ENCODE measurements at regions of chr4 and their contacts with region 1.

Region 1: GRCh38 chr4:151614561-151614960 is 146.2 kb downstream of the GATB start:
- DNase-seq: no peak
- H3K4me3 ChIP-seq: no peak overlapping the region
- H3K4me3 Mint-ChIP-seq: no peak overlapping the region
- H3K27ac Mint-ChIP-seq: no peak overlapping the region
- H3K4me1 ChIP-seq: no peaks in the 10 kb centered on the region
- H3K4me1 Mint-ChIP-seq: no peaks in the 10 kb centered on the region
- H3K27me3 ChIP-seq: no peaks in the 10 kb centered on the region
- H3K27me3 Mint-ChIP-seq: no peaks in the 10 kb centered on the region
- CTCF ChIP-seq: no peak

Region 2: GRCh38 chr4:151276787-151277562 is 337.6 kb before region 1 on chr4 and contains the start of gene PRSS48:
- CTCF ChIA-PET with region 1: no interaction called
- POLR2A ChIA-PET with region 1: no interaction called
- intact Hi-C with region 1: loop called (anchors 1 kb)
- DNase-seq: peak; percentile 74 to 85
- H3K4me3 ChIP-seq: no peak within 1 kb of the TSS
- H3K4me3 Mint-ChIP-seq: no peak within 1 kb of the TSS
- H3K27ac Mint-ChIP-seq: peak within 1 kb of the TSS; percentile 49
- H3K4me1 ChIP-seq: peaks cover 9% of the 10 kb centered on the region
- H3K4me1 Mint-ChIP-seq: peaks cover 33% of the 10 kb centered on the region
- H3K27me3 ChIP-seq: no peaks in the 10 kb centered on the region
- H3K27me3 Mint-ChIP-seq: no peaks in the 10 kb centered on the region
- CTCF ChIP-seq: peak; percentile 75 to 80
- total RNA-seq, gene PRSS48: not detected in 2 replicates

Region 3: DNA sequence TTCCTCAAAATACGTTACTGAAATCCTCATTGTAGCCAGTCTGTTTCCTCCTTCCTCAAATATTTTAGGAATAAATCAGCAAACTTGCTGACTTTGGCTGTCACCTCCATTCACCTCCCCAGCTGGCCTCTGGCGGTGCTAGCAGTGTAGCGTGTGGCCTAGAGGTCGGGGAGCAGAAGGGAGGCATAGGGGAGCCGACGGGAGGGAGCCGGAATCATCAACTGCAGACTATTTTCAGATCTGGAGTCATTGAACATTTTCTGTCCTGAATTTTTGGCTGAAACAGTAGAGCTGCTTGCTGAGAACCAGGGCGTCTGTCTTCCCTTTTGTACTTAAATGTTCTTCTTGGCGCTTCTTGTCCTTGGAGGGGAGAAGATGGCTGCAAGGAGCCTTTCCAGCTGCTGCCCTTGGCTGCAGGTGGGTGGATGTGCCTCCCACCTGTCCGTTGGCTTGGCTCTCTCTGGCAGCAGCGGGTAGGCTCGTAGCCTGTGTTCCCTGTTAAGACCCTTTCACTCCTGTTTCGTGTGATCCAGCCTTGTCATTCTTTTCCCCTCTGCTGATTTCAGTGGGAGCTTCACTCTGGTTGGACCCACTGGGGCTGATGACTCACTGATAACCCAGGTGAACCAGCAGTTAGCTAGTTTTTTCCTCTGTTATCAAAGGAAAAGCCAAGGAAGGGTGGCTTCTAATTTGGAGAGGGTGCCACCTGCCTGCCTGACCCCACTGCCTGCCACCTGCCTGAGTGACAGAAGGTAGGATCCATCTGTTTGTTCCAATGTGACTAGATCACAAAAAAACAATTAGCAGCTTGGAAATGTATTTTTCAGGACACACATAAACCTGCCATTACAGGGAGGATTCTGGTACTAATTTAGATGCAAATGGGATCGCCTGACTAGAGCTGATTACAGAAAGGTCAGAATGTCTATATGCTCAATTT is 10.3 kb after region 1 on chr4:
- CTCF ChIA-PET with region 1: no interaction called
- POLR2A ChIA-PET with region 1: no interaction called
- intact Hi-C with region 1: loop called (anchors 1 kb)
- DNase-seq: no peak
- H3K4me3 ChIP-seq: no peak overlapping the region
- H3K4me3 Mint-ChIP-seq: no peak overlapping the region
- H3K27ac Mint-ChIP-seq: no peak overlapping the region
- H3K4me1 ChIP-seq: no peaks in the 10 kb centered on the region
- H3K4me1 Mint-ChIP-seq: no peaks in the 10 kb centered on the region
- H3K27me3 ChIP-seq: no peaks in the 10 kb centered on the region
- H3K27me3 Mint-ChIP-seq: no peaks in the 10 kb centered on the region
- CTCF ChIP-seq: no peak

Region 4: DNA sequence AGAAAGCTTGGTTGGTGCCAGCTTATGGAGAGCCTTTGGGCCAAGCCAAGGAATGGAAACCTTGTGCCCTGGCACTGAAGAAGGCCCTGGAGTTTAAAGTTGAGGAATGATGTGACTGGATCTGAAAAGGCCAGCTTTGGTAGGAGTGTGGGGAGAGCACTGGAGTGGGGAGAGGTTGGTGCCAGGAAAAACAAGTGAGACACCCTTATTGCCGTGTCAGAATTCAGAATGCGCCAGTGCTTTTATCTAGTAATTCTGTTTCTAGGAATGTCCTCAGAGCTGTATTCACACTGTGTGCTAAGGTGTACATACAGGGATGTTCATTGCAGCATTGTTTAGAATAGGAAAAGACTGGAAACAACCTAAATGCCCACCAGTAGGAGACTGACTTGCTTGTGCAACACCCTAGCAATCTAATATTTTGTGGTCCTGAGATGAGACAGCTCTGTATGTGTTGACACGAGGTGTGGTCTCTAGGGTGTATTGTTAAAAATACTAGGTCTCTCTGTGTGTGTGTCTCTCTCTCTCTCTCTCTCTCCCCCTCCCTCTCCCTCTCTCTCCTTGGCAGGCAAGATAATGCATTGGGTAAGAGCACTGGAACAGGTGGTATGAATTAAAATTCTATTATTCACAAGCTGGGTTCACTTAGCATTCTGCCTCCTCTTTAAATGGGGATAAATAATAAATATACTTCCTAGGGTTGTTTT is 38.4 kb after region 1 on chr4:
- CTCF ChIA-PET with region 1: no interaction called
- POLR2A ChIA-PET with region 1: no interaction called
- intact Hi-C with region 1: no loop called
- DNase-seq: no peak
- H3K4me3 ChIP-seq: no peak overlapping the region
- H3K4me3 Mint-ChIP-seq: no peak overlapping the region
- H3K27ac Mint-ChIP-seq: peak overlapping the region; percentile 2
- H3K4me1 ChIP-seq: no peaks in the 10 kb centered on the region
- H3K4me1 Mint-ChIP-seq: no peaks in the 10 kb centered on the region
- H3K27me3 ChIP-seq: no peaks in the 10 kb centered on the region
- H3K27me3 Mint-ChIP-seq: no peaks in the 10 kb centered on the region
- CTCF ChIP-seq: no peak